Heart left ventricle (tissue), 16 donors: ENCODE measurements at regions of chr5 and their contacts with region 1.

Region 1: DNA sequence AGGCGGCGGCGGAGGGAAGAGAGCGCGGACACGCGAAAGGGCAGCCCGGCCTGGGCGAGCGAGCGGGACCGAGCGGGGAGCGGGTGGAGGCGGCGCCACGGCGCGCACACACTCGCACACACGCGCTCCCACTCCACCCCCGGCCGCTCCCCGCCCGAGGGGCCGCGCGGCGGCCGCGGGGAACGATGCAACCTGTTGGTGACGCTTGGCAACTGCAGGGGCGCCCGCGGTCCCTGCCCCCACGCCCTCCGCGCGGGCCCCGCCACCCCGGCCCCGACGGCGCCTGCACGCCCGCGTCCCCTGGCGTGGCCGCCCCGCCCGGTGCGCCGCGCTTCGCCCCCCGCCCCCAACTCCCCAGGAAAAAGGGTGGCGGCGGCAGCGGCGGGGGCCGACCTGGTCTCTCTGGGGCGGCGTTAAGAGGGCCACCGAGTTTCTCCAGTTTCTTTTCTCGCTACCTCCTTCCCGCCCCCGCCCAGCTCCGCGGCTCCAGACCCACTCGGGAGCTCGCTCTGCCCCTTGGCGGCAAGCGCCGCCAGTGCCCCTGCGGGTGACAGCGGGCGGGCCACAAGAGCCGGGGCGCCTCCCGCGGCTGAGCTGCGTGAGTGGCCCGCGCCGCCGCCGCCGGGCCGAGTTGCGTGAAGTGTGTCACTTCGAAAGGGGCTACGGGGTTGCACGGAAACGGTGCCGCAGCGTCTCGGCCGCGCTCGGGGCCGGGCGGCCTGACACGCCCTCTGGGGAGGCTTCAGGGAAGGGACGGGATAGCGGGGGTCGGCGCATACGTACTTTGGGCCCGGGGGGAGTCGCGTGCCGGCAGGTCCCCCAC is at the start of gene NR3C1:
- DNase-seq: peak; percentile 90 to 96 (median 92)
- ATAC-seq: peak; percentile 61 to 90 (median 77)
- H3K4me3 ChIP-seq: peak within 1 kb of the TSS; percentile 64 to 95 (median 88)
- H3K27ac ChIP-seq: peak within 1 kb of the TSS; percentile 95 to 100 (median 99)
- H3K4me1 ChIP-seq: peaks cover 0 to 38% (median 19%) of the 10 kb centered on the region in 12 donors
- H3K27me3 ChIP-seq: no peaks in the 10 kb centered on the region
- CTCF ChIP-seq: peak; percentile 38 to 86 (median 65)
- POLR2A ChIP-seq: peak in 1 of 2 donors; percentile 58
- total RNA-seq, gene NR3C1: 29.6 to 73.7 (median 50.6) TPM

Region 2: DNA sequence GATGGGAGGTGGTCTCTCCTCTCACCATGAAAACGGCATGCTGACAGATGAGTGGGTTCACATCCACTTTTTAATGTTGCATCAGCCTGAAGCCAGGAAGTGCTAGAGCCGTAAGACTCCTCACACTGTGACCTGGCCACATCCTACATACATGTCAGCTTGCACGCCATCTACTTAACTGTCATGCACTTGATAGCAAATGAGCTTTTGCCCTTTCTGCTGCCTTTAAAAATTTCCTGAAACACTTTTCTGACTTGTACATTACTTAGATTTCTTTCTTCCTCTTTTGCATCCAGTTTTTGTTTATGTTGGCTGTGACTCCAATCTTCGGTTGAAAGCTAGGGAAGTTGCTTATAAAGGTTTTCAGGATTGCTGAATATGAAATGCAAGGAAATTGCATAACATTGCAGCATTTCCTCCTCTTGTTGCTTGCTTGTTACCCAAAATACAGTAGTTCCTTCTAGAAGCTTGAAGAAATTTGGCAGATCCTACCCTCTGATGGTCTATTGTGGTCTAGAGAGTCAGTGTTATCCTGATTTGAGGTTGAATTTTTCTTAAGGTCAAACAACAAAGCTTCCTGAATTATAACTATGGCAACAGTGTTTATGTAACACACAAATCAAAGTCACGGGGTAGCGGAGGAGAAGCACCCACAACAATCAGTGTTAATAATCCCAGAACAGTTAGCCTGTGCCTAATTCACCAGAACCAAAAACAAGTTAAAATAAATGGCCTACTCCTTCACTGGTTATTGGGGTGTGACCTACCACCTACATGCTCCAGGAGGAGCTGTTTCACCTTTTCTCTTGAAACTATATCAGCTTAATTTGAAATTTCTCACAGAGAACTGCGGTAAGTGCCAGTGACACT is 401.1 kb before region 1 on chr5:
- intact Hi-C with region 1: loop called in 8 of 10 experiments (anchors 1 to 10 kb)
- DNase-seq: peak in 1 of 5 donors; percentile 41
- ATAC-seq: peak; percentile 66 to 87 (median 82)
- H3K4me3 ChIP-seq: peak overlapping the region in 2 of 12 donors; percentile 6 to 8
- H3K27ac ChIP-seq: peak overlapping the region; percentile 14 to 89 (median 74)
- H3K4me1 ChIP-seq: peaks cover 7 to 81% (median 55%) of the 10 kb centered on the region in 12 donors
- H3K27me3 ChIP-seq: no peaks in the 10 kb centered on the region
- CTCF ChIP-seq: peak; percentile 26 to 67 (median 50)
- POLR2A ChIP-seq: no peak

Region 3: DNA sequence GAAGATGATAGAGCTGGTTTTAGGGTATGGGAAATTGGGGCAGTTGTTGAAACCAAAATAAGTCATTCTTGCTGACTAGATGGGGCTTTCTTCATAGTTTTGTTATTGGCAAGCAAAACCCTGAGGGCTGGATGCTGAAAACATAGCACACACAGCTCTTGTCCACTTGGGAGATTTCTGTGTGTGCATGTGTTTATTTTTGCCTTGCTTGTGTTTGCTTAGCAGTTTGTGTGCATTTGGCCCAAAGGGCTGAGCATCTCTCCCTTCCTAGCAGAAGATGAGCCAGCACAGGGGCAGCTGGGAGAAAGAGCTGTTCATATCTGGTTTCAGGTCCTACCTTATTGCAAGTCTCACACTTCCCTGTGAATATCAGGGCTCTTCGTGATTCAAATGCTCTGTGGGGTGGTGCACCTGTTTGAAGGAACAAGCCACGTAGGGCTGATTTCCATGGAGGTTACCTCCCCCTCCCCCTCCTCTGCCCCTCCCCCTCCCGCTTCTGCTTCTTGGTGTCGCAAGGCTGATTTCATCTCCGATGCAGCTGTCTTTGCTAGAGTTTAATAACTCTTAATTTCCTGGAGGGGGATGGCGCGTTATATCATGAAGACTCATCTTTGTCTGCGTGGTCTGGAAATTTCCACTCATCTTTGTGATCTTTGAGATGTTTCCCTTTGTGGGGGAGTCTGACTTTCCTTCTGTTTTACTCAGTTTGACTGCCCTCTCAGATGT is 337.1 kb before region 1 on chr5:
- intact Hi-C with region 1: loop called in 1 of 10 experiments (anchors 5 kb)
- DNase-seq: peak in 2 of 5 donors; percentile 43
- ATAC-seq: peak in 1 of 4 donors; percentile 23
- H3K4me3 ChIP-seq: no peak overlapping the region
- H3K27ac ChIP-seq: peak overlapping the region in 8 of 12 donors; percentile 1 to 81 (median 34)
- H3K4me1 ChIP-seq: peaks cover 5 to 60% (median 51%) of the 10 kb centered on the region in 12 donors
- H3K27me3 ChIP-seq: no peaks in the 10 kb centered on the region
- CTCF ChIP-seq: no peak
- POLR2A ChIP-seq: no peak

Region 4: DNA sequence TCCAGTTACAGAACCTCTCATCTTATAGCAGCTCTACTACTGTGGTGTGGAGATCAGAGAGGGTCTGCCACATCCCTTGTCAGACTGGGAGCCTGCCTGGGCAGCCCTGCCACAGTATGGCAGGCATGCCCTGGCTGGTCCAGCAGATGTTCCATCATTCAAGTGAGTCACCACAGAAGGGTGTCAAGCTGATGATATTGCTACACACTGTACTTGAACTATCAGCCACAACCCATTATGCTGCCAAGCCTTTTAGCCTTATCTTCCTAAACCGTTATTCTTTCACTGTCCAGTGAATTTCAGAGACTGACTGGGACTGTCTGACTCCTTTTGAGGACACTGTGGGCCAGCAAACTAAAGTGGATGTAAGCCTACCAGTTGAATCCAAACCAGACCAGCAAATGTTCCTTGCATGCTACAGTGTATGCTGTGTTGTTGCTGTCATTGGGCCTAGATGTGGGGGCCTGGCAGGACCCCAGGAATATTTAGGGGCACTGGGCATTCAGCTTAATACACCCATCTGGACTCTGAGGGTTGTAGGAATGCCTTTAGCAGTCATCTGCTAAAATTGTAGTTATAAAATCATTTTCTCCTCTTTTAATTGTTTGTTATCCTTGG is 202.9 kb before region 1 on chr5:
- intact Hi-C with region 1: loop called in 7 of 10 experiments (anchors 2 to 10 kb)
- DNase-seq: peak in 4 of 5 donors; percentile 56 to 73 (median 68)
- ATAC-seq: peak; percentile 96 to 99 (median 98)
- H3K4me3 ChIP-seq: no peak overlapping the region
- H3K27ac ChIP-seq: peak overlapping the region in 7 of 12 donors; percentile 19 to 58 (median 45)
- H3K4me1 ChIP-seq: peaks cover 0 to 61% (median 33%) of the 10 kb centered on the region in 12 donors
- H3K27me3 ChIP-seq: no peaks in the 10 kb centered on the region
- CTCF ChIP-seq: no peak
- POLR2A ChIP-seq: no peak

Region 5: DNA sequence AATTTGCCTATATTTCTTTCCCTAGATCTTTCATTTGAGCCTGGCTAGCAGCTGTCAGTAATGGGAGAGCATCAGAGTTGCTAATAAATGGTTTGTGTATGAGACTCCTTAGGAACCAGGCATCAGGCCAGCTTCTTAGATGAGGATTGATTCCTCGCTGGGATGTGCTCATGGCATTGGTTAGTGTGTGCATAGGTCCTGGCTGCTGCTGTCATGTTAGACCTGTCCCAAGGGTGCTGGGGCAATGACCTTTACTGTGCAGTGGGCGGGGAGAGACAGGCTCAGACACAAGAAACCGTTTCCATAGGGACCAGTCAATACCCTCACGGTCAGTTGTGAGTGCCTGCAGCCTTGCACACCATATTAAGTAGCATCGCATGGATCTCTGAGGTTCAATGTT is 112.0 kb after region 1 on chr5:
- intact Hi-C with region 1: no loop called
- DNase-seq: peak in 3 of 5 donors; percentile 30 to 36 (median 31)
- ATAC-seq: peak in 3 of 4 donors; percentile 24 to 57 (median 26)
- H3K4me3 ChIP-seq: no peak overlapping the region
- H3K27ac ChIP-seq: peak overlapping the region in 1 of 12 donors; percentile 19
- H3K4me1 ChIP-seq: peaks cover 0 to 12% (median 4%) of the 10 kb centered on the region in 12 donors
- H3K27me3 ChIP-seq: no peaks in the 10 kb centered on the region
- CTCF ChIP-seq: no peak
- POLR2A ChIP-seq: no peak

Region 6: DNA sequence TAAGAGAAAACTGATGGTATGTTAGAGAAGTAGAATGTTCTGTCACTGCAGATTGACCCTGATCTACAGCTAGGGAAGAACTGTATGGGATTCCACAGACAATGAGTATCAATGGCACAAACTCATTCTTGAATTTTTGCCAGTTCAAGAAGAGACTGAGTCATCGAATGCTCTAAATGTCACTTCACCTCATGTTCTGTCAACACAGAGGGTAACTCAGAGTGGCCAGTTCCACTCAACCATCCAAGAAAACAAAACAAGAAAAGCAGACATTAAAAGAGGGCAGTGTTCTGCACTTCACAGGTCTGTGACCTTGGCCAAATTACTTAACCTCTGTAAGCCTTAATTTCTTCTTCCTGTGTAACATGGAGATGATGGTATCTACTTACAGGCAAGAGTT is 276.0 kb after region 1 on chr5:
- intact Hi-C with region 1: loop called in 3 of 10 experiments (anchors 2 to 10 kb)
- DNase-seq: no peak
- ATAC-seq: peak in 2 of 4 donors; percentile 70 to 72
- H3K4me3 ChIP-seq: no peak overlapping the region
- H3K27ac ChIP-seq: peak overlapping the region in 1 of 12 donors; percentile 47
- H3K4me1 ChIP-seq: peaks cover 0 to 31% (median 12%) of the 10 kb centered on the region in 12 donors
- H3K27me3 ChIP-seq: no peaks in the 10 kb centered on the region
- CTCF ChIP-seq: no peak
- POLR2A ChIP-seq: no peak